ENCODE measurements at regions of chr9 and their contacts with region 1.

Region 1: GRCh38 chr9:93453047-93453914 is at the start of gene FAM120AOS:
- DNase-seq: peak; percentile 91
- H3K4me3 ChIP-seq: peak within 1 kb of the TSS; percentile 83
- H3K27ac ChIP-seq: peak within 1 kb of the TSS; percentile 74
- H3K4me1 ChIP-seq: peaks cover 58% of the 10 kb centered on the region
- CTCF ChIP-seq: no peak
- total RNA-seq, gene FAM120AOS: 47.1 and 50.2 TPM in 2 replicates

Region 2: GRCh38 chr9:93464395-93464794 is 11.1 kb after region 1 on chr9:
- CTCF ChIA-PET with region 1: interaction called, 4 read pairs
- POLR2A ChIA-PET with region 1: interaction called, 34 read pairs
- intact Hi-C with region 1: no loop called
- DNase-seq: peak; percentile 74
- H3K4me3 ChIP-seq: peak overlapping the region; percentile 49
- H3K27ac ChIP-seq: peak overlapping the region; percentile 77
- H3K4me1 ChIP-seq: peaks cover 96% of the 10 kb centered on the region
- CTCF ChIP-seq: no peak

Region 3: GRCh38 chr9:93642961-93643360 is 189.7 kb after region 1 on chr9:
- CTCF ChIA-PET with region 1: no interaction called
- POLR2A ChIA-PET with region 1: no interaction called
- intact Hi-C with region 1: no loop called
- DNase-seq: no peak
- H3K4me3 ChIP-seq: no peak overlapping the region
- H3K27ac ChIP-seq: no peak overlapping the region
- H3K4me1 ChIP-seq: no peaks in the 10 kb centered on the region
- CTCF ChIP-seq: no peak

Measured in OCI-LY7 (cell line).